Activated T-helper 2 cell treated with anti-CD3 and anti-CD28 coated beads, Interferon-gamma antibody, Interleukin-2, Interleukin-4, amounts not matched to agents 10 μg/mL and 5 μg/mL and 100 μg/mL, durations not matched to agents 14 hours and 24 hours and 36 hours (primary cell): ENCODE measurements at regions of chr3 and their contacts with region 1.

Region 1: DNA sequence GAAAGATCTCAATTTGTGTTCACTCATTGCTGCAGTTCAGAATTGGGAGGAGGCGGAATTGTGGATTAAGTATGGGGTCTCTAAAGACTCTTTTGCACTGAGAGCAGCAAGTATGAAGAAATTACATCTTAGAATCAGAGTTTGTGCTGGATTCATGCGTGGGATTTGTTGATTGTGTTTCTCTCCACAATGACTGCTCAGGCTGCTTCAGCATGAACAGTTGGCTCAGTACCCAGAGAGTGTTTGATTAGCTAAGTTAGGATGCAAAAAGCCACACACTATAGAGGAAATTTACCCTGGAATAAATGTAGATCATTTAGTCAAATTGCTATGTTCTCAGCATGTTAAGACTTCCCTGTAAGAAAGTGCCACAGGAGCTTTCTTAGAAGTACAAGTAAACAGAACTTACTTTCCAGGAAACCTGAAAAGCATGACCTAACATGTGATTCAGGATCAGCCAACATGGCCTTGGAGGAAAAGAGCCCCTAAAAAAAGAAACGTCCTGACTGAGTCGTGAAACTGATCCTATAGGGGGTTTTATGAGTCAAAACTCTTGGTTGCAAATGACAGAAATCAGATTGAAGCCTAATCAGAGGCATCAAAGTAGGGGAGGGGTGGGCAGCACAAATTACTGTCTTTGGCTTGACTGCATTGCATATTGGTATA is 32.6 kb downstream of the HHLA2 start:
- DNase-seq: no peak
- H3K4me3 Mint-ChIP-seq: no peak overlapping the region
- H3K27ac Mint-ChIP-seq: peak overlapping the region; percentile 15
- H3K4me1 Mint-ChIP-seq: peaks cover 40% of the 10 kb centered on the region
- H3K27me3 Mint-ChIP-seq: no peaks in the 10 kb centered on the region

Region 2: DNA sequence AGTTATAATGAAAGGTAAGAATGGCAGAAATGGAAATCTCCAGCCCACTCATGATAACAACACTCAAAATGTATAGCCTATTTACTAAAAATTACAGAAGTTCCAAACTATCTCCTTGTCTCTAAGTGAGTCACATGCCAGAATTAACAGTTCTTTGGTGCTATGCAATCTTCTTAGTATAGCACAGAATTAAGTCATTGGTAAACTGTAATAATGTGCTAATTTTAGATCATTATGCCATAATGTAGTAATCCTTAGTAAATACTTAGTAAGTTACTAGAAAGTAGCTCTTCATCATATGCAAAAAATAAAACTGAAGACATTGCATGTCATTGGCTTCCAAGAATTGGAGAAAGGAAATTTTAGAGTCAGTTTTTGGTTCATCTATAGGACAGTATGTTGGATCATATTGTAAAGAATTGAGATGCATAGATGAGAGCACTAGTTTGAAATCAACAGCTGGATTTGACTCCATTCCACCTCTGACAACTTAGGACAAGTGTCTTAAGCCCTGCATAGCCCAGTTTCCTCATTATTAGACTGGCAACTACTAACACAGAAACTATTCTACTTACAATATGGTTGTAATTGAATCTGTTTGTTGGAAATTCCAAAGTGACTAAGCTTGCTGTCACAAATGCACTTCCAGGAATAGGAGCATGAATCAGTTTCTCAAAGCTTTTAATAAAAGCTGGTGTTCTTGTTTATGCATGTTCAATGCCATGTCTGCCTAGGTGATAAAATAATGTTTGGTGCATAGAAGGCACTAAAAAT is 198.1 kb before region 1 on chr3:
- intact Hi-C with region 1: loop called (anchors 5 kb)
- DNase-seq: no peak
- H3K4me3 Mint-ChIP-seq: peak overlapping the region; percentile 27
- H3K27ac Mint-ChIP-seq: peak overlapping the region; percentile 91
- H3K4me1 Mint-ChIP-seq: peaks cover 80% of the 10 kb centered on the region
- H3K27me3 Mint-ChIP-seq: no peaks in the 10 kb centered on the region

Region 3: GRCh38 chr3:108342837-108343478 is 14.0 kb after region 1 on chr3:
- intact Hi-C with region 1: loop called (anchors 1 kb)
- DNase-seq: no peak
- H3K4me3 Mint-ChIP-seq: no peak overlapping the region
- H3K27ac Mint-ChIP-seq: peak overlapping the region; percentile 28
- H3K4me1 Mint-ChIP-seq: peaks cover 18% of the 10 kb centered on the region
- H3K27me3 Mint-ChIP-seq: peaks cover 21% of the 10 kb centered on the region